Colonic mucosa (tissue), 4 donors: ENCODE measurements at regions of chr14 and their contacts with region 1.

Region 1: DNA sequence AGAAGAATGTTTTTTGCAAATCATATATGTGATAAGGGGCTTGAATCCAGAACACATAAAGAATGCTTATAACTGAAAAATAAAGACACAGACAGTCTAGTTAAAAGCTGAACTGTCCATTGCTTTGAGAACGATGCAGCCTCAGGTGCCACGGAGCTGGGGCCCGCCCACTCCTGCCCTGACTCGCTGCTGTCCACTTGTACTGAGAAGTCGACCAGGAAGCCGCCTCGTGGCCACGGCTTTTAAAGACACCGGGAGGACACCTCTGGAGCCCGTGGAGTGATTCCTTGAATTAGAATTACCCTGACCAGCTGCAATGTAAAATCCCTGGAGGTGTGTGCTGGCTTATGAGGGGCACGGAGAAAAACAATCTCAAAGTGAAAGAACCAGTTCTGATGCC is 24.0 kb upstream of the TEX22 start:
- DNase-seq: no peak
- H3K4me3 ChIP-seq: no peak overlapping the region
- H3K27ac ChIP-seq: no peak overlapping the region
- H3K4me1 ChIP-seq: no peaks in the 10 kb centered on the region
- H3K27me3 ChIP-seq: no peaks in the 10 kb centered on the region
- CTCF ChIP-seq: no peak

Region 2: GRCh38 chr14:105448706-105449111 is 74.3 kb after region 1 on chr14:
- intact Hi-C with region 1: loop called (anchors 5 kb)
- DNase-seq: peak; percentile 59
- H3K4me3 ChIP-seq: no peak overlapping the region
- H3K27ac ChIP-seq: no peak overlapping the region
- H3K4me1 ChIP-seq: no peaks in the 10 kb centered on the region
- H3K27me3 ChIP-seq: no peaks in the 10 kb centered on the region
- CTCF ChIP-seq: peak; percentile 87

Region 3: DNA sequence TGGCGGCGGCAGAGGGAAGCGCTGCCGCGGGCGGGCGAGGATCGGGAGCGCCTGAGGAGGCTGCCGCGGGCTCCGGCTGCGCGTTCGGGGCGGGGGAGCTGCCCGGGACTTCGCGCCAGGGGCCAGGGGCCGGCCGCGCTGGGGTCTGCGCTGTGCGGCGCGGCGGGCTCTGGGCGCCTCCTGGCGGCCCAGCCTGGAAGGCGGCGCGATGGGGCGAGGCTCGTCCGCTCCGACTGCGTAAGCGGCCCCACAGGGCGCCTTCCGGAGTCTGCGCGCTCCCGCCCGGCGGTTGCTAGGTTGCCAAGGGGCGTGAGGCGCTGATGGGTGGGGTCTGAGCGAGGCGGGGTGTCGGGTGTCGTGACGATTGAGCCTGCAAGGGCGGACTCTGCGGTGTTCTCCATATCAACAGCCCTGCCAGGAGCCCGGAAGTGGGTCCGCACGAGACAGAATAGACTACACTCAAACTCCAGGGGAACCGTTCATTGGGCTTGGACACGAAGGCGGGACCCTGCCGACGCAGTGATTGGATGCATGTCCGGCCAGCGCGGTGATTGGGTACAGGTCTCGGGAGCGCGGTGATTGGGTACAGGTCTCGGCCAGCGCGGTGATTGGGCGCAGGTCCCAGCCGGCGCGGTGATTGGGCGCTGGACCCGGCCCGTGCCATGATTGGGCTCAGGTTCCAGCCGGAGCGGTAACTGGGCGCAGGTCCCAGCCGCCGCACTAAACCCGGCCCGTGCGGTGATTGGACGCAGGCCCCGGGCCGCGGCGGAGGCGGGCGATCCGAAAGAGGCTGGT is 116.4 kb after region 1 on chr14 and contains the start of gene TEDC1:
- intact Hi-C with region 1: loop called (anchors 5 kb)
- DNase-seq: peak; percentile 99
- H3K4me3 ChIP-seq: peak within 1 kb of the TSS; percentile 91
- H3K27ac ChIP-seq: peak within 1 kb of the TSS; percentile 96
- H3K4me1 ChIP-seq: peaks cover 17% of the 10 kb centered on the region
- H3K27me3 ChIP-seq: peaks cover 12% of the 10 kb centered on the region
- CTCF ChIP-seq: peak; percentile 61
- total RNA-seq, gene TEDC1: 15.0 to 55.7 TPM

Region 4: DNA sequence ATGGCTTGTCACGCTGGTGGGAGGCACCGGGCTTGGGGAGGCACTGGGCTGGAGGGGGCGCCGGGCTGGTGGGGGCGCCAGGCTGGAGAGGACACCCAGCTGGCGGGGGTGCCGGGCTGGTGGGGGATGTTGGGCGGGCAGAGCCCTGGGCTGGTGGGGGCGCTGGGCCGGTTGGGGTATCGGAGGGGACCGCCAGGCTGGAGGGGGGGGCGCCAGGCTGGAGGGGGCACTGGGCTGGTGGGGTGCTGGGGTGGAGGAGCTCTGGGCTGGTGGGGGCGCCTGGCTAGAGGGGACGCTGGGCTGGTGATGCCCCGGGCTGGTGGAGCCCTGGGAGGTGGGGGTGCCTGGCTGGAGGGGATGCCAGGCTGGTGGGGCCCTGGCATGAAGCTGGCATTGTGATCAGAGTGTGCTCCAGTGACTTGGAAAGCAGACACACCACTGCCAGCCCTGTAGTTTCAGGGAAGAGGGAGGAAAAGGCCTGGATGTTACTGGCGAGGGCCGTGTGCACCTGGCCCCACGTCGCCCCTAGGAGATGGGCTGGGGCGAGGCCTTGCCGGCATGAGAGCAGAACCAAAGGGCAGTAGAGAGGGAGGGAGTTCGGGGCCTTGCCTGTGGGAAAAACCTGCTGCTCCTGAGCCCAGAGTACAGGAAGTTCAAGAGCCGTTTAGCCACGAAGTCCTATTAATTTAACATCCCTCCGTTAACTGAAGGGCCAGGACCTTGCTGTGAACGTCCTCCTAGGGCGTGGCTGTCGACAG is 129.7 kb after region 1 on chr14:
- intact Hi-C with region 1: no loop called
- DNase-seq: no peak
- H3K4me3 ChIP-seq: no peak overlapping the region
- H3K27ac ChIP-seq: no peak overlapping the region
- H3K4me1 ChIP-seq: no peaks in the 10 kb centered on the region
- H3K27me3 ChIP-seq: no peaks in the 10 kb centered on the region
- CTCF ChIP-seq: no peak